ENCODE measurements at regions of chr11 and their contacts with region 1.

Region 1: DNA sequence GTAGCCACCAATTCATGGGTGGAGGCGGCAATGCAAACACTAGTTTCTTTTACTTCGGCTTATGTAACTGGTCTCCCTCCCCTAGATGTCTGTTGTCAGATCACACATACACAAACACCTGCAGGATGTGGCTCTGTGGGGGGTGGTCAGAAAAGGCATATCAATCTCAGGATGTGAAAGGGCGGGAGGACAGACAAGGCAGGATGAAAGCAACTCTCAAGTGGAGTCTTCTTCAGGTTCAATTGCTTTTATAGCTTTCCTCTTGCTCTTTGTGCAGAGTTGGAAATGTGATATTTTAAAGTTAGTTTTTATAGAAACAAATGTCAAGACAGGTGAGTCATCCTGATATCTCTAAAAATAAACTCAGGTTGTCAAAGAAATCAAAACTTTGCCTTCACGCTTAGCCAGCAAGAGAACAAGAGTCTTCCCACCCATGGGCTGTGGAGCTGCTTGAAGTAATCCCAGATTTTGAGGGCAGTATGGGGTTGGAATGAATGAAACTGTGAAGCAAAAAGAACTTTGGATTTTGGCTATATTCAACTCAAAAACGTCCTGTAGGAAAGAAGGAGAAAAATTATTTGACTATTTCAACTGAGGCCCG is 423.4 kb downstream of the GUCY1A2 start:
- DNase-seq: peak; percentile 73
- ATAC-seq: peak; percentile 90
- H3K4me3 ChIP-seq: no peak overlapping the region
- H3K27ac ChIP-seq: peak overlapping the region; percentile 28
- H3K4me1 ChIP-seq: peaks cover 13% of the 10 kb centered on the region
- H3K27me3 ChIP-seq: no peaks in the 10 kb centered on the region
- CTCF ChIP-seq: no peak

Region 2: GRCh38 chr11:107017433-107018227 is 422.8 kb after region 1 on chr11:
- CTCF ChIA-PET with region 1: no interaction called
- POLR2A ChIA-PET with region 1: no interaction called
- intact Hi-C with region 1: loop called (anchors 10 kb)
- DNase-seq: peak; percentile 21
- ATAC-seq: peak; percentile 63
- H3K4me3 ChIP-seq: peak overlapping the region; percentile 57
- H3K27ac ChIP-seq: no peak overlapping the region
- H3K4me1 ChIP-seq: peaks cover 17% of the 10 kb centered on the region; the same call in 1 of the 2 replicates
- H3K27me3 ChIP-seq: peaks cover 61% of the 10 kb centered on the region
- CTCF ChIP-seq: peak; percentile 65